ENCODE measurements at regions of chr1 and their contacts with region 1.

Region 1: DNA sequence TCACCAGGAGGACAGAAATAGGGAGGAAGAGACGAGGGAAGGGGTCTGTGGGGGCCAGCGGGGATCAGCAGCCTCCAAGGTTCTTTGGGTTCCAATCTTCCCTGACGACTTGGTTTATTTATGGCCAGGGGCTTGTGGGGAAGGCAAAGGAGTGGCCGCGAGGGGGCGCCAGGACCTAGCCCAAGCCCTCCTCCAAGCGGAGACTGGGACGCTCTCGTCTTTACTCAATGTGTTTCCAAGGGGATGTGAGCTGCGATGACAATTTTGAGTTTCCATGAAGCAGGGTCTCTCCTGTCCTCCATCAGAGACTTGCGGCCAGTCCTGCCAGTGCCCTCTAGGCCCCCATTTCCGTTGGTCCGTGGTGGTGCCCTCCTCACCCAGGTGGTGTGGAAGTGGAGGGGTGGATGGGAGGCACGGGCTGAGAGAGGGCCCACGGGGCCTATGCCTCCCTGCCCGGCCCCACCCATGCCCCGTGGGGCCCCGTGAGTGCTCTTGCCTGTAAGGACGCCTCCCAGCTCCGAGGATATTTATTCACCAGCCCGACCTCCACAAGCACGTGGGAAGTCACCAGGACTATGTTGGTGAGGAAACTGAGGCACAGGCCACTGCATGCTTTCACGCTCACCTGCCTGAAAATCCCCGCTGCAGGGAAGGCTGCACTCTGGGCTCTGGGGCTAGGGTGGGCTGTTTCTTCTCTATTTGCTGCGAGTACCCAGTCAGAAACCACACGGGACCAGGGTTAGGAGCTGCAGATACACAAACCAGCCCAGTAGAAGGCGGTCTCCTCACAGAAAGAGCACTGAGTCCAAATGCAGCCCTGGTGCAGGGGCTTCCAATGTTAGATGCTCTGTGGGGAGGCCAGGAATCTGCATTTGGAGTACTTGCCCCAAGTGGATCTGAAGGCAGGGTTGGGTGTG is 26.5 kb downstream of the DMRTB1 start:
- DNase-seq: peak; percentile 92
- H3K4me3 ChIP-seq: peak overlapping the region in 1 of 2 experiments; percentile 38; a peak in 1 of 4 replicates
- H3K27ac ChIP-seq: no peak overlapping the region
- H3K4me1 ChIP-seq: peaks cover 0 to 19% of the 10 kb centered on the region in 2 experiments; a peak in 1 of 4 replicates
- H3K27me3 ChIP-seq: no peaks in the 10 kb centered on the region; the same call in 1 of the 2 replicates
- CTCF ChIP-seq: peak; percentile 93
- EP300 ChIP-seq: no peak
- RAD21 ChIP-seq: peak; percentile 98

Region 2: GRCh38 chr1:53326088-53326597 is 159.6 kb before region 1 on chr1:
- CTCF ChIA-PET with region 1: no interaction called
- POLR2A ChIA-PET with region 1: no interaction called
- DNase-seq: peak; percentile 96
- H3K4me3 ChIP-seq: peak overlapping the region; percentile 76 to 96
- H3K27ac ChIP-seq: peak overlapping the region; percentile 72 to 81
- H3K4me1 ChIP-seq: peaks cover 0 to 29% of the 10 kb centered on the region in 2 experiments; a peak in 2 of 4 replicates
- H3K27me3 ChIP-seq: no peaks in the 10 kb centered on the region
- CTCF ChIP-seq: no peak
- EP300 ChIP-seq: no peak
- RAD21 ChIP-seq: no peak; the same call in 1 of the 2 replicates

Region 3: GRCh38 chr1:53470155-53470554 is 15.6 kb before region 1 on chr1:
- CTCF ChIA-PET with region 1: interaction called, 41 read pairs
- POLR2A ChIA-PET with region 1: no interaction called
- DNase-seq: no peak
- H3K4me3 ChIP-seq: peak overlapping the region in 1 of 2 experiments; percentile 46; a peak in 1 of 4 replicates
- H3K27ac ChIP-seq: no peak overlapping the region
- H3K4me1 ChIP-seq: peaks cover 0 to 7% of the 10 kb centered on the region in 2 experiments; a peak in 1 of 4 replicates
- H3K27me3 ChIP-seq: no peaks in the 10 kb centered on the region; the same call in 1 of the 2 replicates
- CTCF ChIP-seq: no peak
- EP300 ChIP-seq: no peak
- RAD21 ChIP-seq: no peak

Region 4: DNA sequence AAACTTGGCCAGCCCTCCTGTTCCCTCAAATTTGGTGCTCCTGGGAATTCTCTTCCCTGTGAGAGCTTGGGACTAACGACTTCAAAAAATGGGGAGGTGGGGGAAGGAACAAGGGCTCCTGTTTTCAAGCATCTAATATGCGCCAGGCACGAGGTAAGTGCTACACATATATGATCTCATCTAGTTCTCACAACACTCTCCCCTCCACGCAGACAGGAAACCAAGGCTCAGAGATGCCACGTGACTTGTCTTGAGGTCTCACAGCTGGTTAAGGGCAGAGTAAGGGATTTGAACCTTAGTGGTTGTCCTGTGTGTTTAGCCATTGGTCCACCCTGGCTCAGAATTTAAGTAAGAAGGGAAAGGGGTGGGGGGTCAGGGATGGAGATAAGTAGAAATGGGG is 99.4 kb after region 1 on chr1:
- CTCF ChIA-PET with region 1: interaction called, 39 read pairs
- POLR2A ChIA-PET with region 1: no interaction called
- DNase-seq: no peak
- H3K4me3 ChIP-seq: no peak overlapping the region
- H3K27ac ChIP-seq: peak overlapping the region in 1 of 2 experiments; percentile 83; a peak in 2 of 4 replicates
- H3K4me1 ChIP-seq: peaks cover 0 to 81% of the 10 kb centered on the region in 2 experiments; a peak in 2 of 4 replicates
- H3K27me3 ChIP-seq: no peaks in the 10 kb centered on the region
- CTCF ChIP-seq: no peak
- EP300 ChIP-seq: no peak
- RAD21 ChIP-seq: no peak

Region 5: GRCh38 chr1:53639251-53639763 is 153.6 kb after region 1 on chr1:
- CTCF ChIA-PET with region 1: interaction called, 26 read pairs
- POLR2A ChIA-PET with region 1: no interaction called
- DNase-seq: no peak
- H3K4me3 ChIP-seq: no peak overlapping the region
- H3K27ac ChIP-seq: no peak overlapping the region
- H3K4me1 ChIP-seq: peaks cover 0 to 42% of the 10 kb centered on the region in 2 experiments; a peak in 2 of 4 replicates
- H3K27me3 ChIP-seq: no peaks in the 10 kb centered on the region
- CTCF ChIP-seq: no peak
- EP300 ChIP-seq: no peak
- RAD21 ChIP-seq: no peak

Region 6: GRCh38 chr1:53697721-53698383 is 212.1 kb after region 1 on chr1:
- CTCF ChIA-PET with region 1: interaction called, 15 read pairs
- POLR2A ChIA-PET with region 1: no interaction called
- DNase-seq: no peak
- H3K4me3 ChIP-seq: no peak overlapping the region
- H3K27ac ChIP-seq: no peak overlapping the region
- H3K4me1 ChIP-seq: peaks cover 0 to 18% of the 10 kb centered on the region in 2 experiments; a peak in 1 of 4 replicates
- H3K27me3 ChIP-seq: no peaks in the 10 kb centered on the region
- CTCF ChIP-seq: no peak
- EP300 ChIP-seq: no peak
- RAD21 ChIP-seq: no peak

Region 7: GRCh38 chr1:53754484-53755312 is 269.0 kb after region 1 on chr1:
- CTCF ChIA-PET with region 1: interaction called, 76 read pairs
- POLR2A ChIA-PET with region 1: no interaction called
- DNase-seq: peak; percentile 58
- H3K4me3 ChIP-seq: no peak overlapping the region
- H3K27ac ChIP-seq: no peak overlapping the region
- H3K4me1 ChIP-seq: no peaks in the 10 kb centered on the region
- H3K27me3 ChIP-seq: no peaks in the 10 kb centered on the region
- CTCF ChIP-seq: peak; percentile 87
- EP300 ChIP-seq: no peak
- RAD21 ChIP-seq: peak; percentile 87

Measured in SK-N-SH (cell line).